ENCODE measurements at regions of chrX and their contacts with region 1.

Region 1: DNA sequence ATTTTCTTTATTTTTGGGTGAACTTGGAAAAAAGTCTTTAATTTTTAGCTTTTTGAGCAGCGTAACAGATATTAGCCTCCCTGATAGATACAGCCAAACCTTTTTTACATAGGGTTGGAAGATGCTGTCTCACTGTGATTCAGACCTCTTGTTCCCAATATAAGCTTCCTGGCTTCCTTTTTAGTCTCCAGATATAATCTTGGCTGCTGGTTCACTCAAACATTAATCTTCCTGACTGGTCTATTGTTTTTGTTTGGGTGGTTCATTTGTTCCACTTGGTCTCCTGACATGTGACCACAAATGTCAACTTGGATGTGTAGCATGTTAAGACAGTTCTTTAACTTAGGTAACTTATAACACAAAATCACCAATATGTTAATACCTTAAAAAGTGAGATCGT is 23.0 kb downstream of the RPA4 start:
- DNase-seq: peak; percentile 90
- H3K4me3 ChIP-seq: no peak overlapping the region
- H3K27ac ChIP-seq: peak overlapping the region; percentile 86
- H3K4me1 ChIP-seq: peaks cover 31% of the 10 kb centered on the region
- H3K27me3 ChIP-seq: no peaks in the 10 kb centered on the region
- CTCF ChIP-seq: no peak
- POLR2A ChIP-seq: no peak

Region 2: GRCh38 chrX:96924581-96924980 is 17.8 kb after region 1 on chrX:
- CTCF ChIA-PET with region 1: no interaction called
- POLR2A ChIA-PET with region 1: no interaction called
- dilution Hi-C with region 1: no loop called
- intact Hi-C with region 1: loop called (anchors 2 kb)
- DNase-seq: peak; percentile 70
- H3K4me3 ChIP-seq: no peak overlapping the region
- H3K27ac ChIP-seq: peak overlapping the region; percentile 24
- H3K4me1 ChIP-seq: peaks cover 15% of the 10 kb centered on the region
- H3K27me3 ChIP-seq: no peaks in the 10 kb centered on the region
- CTCF ChIP-seq: no peak
- POLR2A ChIP-seq: no peak

Measured in endothelial cell of umbilical vein (primary cell).